ENCODE measurements at regions of chr12 and their contacts with region 1.

Region 1: GRCh38 chr12:52167954-52168717 is 23.7 kb downstream of the KRT80 start:
- DNase-seq: no peak
- ATAC-seq: no peak
- H3K4me3 ChIP-seq: no peak overlapping the region
- H3K27ac ChIP-seq: no peak overlapping the region
- H3K4me1 ChIP-seq: peaks cover 13% of the 10 kb centered on the region
- H3K27me3 ChIP-seq: no peaks in the 10 kb centered on the region
- CTCF ChIP-seq: no peak
- POLR2A ChIP-seq: no peak

Region 2: DNA sequence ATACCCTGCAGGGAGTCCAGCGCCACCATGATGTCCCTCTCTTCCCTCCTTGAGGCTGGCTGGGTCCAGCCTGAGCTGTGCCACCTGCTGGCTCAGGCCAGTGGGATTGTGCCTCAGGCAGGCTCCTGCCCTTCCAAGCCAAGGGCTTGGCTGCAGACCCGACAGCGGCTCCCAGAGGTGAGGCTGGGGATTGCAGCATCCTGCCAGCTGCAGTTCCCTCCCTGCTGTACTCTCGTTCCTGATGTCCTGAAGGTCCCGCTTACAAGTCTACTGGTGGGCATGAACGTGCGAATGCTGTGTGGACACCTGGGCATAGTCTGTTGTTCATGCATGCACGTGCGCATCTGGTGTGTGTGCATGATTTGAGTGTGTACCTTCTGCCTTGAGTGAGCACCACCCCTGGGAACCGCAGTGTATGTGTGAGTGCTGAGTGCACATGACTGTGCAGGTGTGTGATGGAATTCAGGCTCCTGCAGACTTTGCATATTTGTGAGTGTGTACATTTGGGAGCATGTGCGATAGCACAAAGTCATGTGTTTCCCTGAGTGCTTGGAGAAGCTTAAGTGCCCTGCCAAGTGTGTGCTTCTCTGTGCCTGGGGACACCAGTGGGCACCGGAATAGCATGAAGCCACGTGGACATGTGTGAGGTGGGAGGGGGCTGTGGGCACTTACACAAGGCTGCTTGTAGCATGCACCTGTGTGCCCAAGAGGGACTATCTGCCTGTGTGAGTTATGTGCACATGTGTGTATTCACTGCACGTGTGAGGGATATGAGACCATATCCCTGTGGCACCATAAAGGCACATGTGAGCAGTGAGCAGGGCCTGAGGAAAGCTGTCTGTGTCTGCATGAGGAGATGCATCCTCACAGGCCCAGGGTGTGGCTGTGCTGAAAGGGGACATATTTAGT is 45.6 kb after region 1 on chr12:
- intact Hi-C with region 1: loop called (anchors 5 kb)
- DNase-seq: peak; percentile 89 to 91 (median 90)
- ATAC-seq: peak; percentile 89
- H3K4me3 ChIP-seq: no peak overlapping the region
- H3K27ac ChIP-seq: peak overlapping the region; percentile 11 to 40 (median 25)
- H3K4me1 ChIP-seq: peaks cover 65% of the 10 kb centered on the region
- H3K27me3 ChIP-seq: no peaks in the 10 kb centered on the region
- CTCF ChIP-seq: peak; percentile 95 to 100 (median 99)
- POLR2A ChIP-seq: no peak

Region 3: DNA sequence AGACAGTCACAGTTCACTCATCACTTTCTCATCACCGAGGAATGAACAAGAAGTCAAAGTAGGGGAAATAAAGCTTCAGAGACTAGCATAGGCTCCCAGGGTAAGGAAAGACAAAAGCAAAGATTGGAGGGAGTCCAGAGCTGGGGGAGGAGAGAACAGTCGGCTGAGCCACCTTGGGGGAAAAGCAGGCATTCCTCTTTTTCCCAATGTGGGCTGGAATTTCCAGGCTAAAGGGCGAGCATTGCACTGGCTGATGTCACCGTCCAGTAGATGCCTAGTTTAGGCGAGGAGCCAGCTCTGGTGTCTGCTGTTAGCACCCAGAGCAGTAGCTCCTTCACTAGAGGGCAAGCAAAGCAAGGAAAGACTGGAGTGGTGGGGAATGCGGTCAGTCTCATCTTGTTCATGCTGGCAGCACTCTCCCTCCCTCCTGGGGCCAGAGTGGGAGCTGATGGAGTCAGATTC is 274.5 kb after region 1 on chr12:
- intact Hi-C with region 1: no loop called
- DNase-seq: peak; percentile 20 to 48 (median 34)
- ATAC-seq: peak; percentile 28
- H3K4me3 ChIP-seq: no peak overlapping the region
- H3K27ac ChIP-seq: no peak overlapping the region
- H3K4me1 ChIP-seq: no peaks in the 10 kb centered on the region
- H3K27me3 ChIP-seq: no peaks in the 10 kb centered on the region
- CTCF ChIP-seq: no peak
- POLR2A ChIP-seq: no peak

Region 4: GRCh38 chr12:52645120-52645761 is 477.1 kb after region 1 on chr12:
- intact Hi-C with region 1: no loop called
- DNase-seq: no peak
- ATAC-seq: no peak
- H3K4me3 ChIP-seq: no peak overlapping the region
- H3K27ac ChIP-seq: no peak overlapping the region
- H3K4me1 ChIP-seq: no peaks in the 10 kb centered on the region
- H3K27me3 ChIP-seq: no peaks in the 10 kb centered on the region
- CTCF ChIP-seq: no peak
- POLR2A ChIP-seq: no peak